SK-N-SH (cell line): ENCODE measurements at regions of chr11 and their contacts with region 1.

Region 1: DNA sequence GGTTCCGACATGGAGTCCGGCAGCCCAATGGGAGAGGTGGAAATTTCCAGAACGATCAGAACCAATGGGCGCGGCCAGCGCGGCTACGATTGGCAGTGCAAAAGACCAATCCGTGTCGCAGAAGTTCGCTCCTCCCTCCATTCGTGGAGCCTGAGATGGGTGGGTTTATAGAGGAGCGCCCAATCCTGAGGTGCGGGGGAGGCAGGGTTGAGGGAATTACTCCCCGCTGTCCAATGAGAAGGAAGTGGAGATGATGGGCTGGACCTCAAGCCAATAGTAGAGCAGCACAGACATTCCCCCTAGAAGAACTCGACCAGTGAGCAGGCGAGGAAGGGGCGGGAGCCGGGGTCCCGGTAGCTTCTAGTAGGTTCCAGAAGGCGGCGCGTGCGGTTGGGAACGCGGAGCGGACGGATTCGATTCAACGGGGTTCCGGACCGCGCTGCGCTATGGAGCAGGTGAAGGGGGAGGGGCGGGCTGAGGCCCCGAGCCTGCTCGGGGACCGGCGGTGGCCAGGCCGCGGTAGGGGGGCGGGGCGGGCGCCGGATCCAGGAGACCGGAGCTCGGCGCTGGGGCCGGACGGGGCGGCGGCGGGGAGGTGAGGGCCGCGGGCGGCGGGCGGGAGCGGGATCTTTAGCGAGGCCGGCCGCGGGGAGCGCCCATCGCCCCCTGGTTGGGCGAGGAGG is at the start of gene STIP1:
- DNase-seq: peak; percentile 96
- H3K4me3 ChIP-seq: peak within 1 kb of the TSS; percentile 59 to 67
- H3K27ac ChIP-seq: peak within 1 kb of the TSS; percentile 88 to 90
- H3K4me1 ChIP-seq: peaks cover 8 to 24% of the 10 kb centered on the region in 2 experiments; a peak in 3 of 4 replicates
- H3K27me3 ChIP-seq: no peaks in the 10 kb centered on the region
- CTCF ChIP-seq: peak; percentile 29; the same call in 1 of the 2 replicates
- EP300 ChIP-seq: peak in 1 of 2 experiments; percentile 85; a peak in 2 of 4 replicates
- RAD21 ChIP-seq: no peak
- polyA plus RNA-seq, gene STIP1: 163 TPM in 2 replicates

Region 2: DNA sequence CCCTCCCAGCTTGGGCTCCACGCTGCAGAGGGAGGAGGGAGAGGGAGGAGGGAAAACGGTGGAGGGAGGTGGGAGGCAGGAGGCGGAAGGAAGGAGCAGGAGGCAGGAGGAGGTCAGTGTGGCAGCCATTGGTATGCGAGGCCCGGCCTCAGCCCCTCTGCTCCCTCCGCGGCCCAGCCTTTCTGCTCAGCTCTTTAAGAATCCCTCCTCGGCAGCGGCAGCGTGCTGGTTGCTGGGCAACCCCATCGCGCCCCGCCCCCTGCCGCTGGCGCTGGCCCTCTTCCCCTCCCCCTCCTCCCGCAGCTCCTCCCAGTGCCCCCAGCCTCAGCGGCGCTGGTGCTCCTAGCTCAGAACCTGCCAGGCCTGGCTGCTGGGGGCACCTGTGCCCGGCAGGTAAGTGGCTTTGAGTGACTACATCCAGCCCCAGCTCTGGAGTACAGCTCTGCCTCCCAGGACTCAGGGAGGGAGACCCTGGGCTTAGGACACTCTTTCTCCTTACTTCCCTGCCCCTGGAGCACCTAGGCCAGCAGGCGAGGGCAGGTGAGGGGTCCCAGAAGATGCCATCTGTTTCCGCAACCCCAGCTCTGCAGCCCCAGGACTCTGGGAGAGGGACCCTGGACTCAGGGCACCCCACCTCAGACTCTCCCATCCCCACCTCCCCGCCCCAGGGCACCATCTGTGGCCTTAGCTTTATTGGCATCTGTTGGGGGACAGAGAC is 157.4 kb before region 1 on chr11:
- CTCF ChIA-PET with region 1: no interaction called
- POLR2A ChIA-PET with region 1: no interaction called
- DNase-seq: peak; percentile 81
- H3K4me3 ChIP-seq: no peak overlapping the region; a peak in 1 of 4 replicates
- H3K27ac ChIP-seq: no peak overlapping the region
- H3K4me1 ChIP-seq: peaks cover 0 to 20% of the 10 kb centered on the region in 2 experiments; a peak in 1 of 4 replicates
- H3K27me3 ChIP-seq: no peaks in the 10 kb centered on the region
- CTCF ChIP-seq: no peak
- EP300 ChIP-seq: no peak
- RAD21 ChIP-seq: no peak

Region 3: DNA sequence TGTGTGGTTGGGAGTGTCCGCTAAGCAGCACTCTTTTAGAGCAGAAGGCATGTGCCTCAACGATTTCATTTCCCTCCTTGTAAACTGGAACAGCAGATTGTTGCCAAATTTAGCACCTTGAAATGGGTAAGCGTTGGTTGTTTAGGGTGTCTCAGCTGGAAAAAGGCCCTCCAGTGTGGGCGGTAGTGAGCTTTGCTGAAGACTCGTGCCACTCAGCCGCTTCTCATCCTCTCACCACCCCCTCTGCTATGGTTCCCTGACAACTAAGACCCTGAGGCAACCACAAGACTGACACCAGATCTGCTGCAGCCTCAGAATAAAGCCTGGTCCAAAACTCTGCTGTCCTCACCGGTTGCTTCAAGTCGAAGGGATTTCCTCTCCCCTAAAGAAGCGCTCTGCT is 10.7 kb after region 1 on chr11:
- CTCF ChIA-PET with region 1: interaction called, 10 read pairs
- POLR2A ChIA-PET with region 1: interaction called, 7 read pairs
- DNase-seq: no peak
- H3K4me3 ChIP-seq: no peak overlapping the region
- H3K27ac ChIP-seq: no peak overlapping the region
- H3K4me1 ChIP-seq: no peaks in the 10 kb centered on the region
- H3K27me3 ChIP-seq: no peaks in the 10 kb centered on the region
- CTCF ChIP-seq: no peak
- EP300 ChIP-seq: no peak
- RAD21 ChIP-seq: no peak

Region 4: GRCh38 chr11:64331557-64332371 is 145.8 kb after region 1 on chr11:
- CTCF ChIA-PET with region 1: no interaction called
- POLR2A ChIA-PET with region 1: no interaction called
- DNase-seq: peak; percentile 65
- H3K4me3 ChIP-seq: no peak overlapping the region
- H3K27ac ChIP-seq: no peak overlapping the region
- H3K4me1 ChIP-seq: peaks cover 4 to 6% of the 10 kb centered on the region in 2 experiments; a peak in 2 of 4 replicates
- H3K27me3 ChIP-seq: no peaks in the 10 kb centered on the region
- CTCF ChIP-seq: peak; percentile 72
- EP300 ChIP-seq: no peak
- RAD21 ChIP-seq: peak; percentile 44